Heart right ventricle (tissue), 16 donors: ENCODE measurements at regions of chr1 and their contacts with region 1.

Region 1: DNA sequence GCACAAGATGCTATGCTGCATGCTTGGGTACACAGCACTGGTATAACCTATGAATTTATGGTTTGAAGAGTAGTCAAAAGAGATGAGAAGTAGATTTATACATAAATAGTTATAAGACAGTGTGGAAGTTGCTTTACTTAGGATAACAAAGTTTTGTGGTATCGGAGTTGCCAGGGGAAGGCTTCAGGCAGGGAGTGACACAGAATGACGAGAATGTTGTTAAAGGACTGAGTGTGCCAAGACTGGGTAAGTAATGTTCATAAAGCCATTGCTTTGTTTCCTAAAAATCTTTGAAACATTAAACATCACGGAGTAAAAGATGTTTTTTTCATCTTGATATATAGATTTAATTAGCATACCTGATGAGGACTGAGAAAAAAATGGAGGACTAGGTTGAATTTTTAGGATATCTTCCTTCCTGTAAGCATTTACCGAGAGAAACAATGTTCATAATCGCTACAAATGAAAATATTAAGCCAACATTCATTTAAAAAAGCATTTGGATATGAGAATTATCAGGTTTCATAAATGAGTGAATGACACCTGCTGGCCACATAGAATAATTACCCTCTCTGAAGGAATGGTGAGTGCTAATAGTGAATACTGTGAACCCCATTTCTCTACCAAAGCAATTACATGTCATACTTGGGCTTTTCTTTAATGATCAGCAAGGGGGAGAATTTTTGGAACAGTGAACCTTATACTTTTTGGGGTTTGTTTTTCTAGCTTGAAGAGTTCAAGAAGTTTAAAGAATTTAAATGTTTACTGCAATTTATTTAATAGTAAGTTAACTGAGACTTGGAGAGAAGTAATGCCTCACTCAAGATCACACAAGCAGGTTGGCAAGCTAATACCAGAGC is 28.4 kb downstream of the EXTL2 start:
- DNase-seq: no peak
- ATAC-seq: peak in 7 of 8 donors; percentile 57 to 75 (median 69)
- H3K4me3 ChIP-seq: peak overlapping the region in 1 of 10 donors; percentile 10
- H3K27ac ChIP-seq: no peak overlapping the region
- H3K4me1 ChIP-seq: peaks cover 0 to 11% (median 0%) of the 10 kb centered on the region in 9 donors
- H3K27me3 ChIP-seq: no peaks in the 10 kb centered on the region
- CTCF ChIP-seq: peak; percentile 45 to 78 (median 71)

Region 2: GRCh38 chr1:99808391-99809115 is 1057.7 kb before region 1 on chr1:
- intact Hi-C with region 1: loop called in 7 of 10 experiments (anchors 5 to 10 kb)
- DNase-seq: peak in 1 of 2 donors; percentile 54
- ATAC-seq: peak; percentile 87 to 96 (median 90)
- H3K4me3 ChIP-seq: peak overlapping the region in 4 of 10 donors; percentile 9 to 32 (median 16)
- H3K27ac ChIP-seq: peak overlapping the region in 4 of 10 donors; percentile 26 to 61 (median 45)
- H3K4me1 ChIP-seq: peaks cover 0 to 13% (median 6%) of the 10 kb centered on the region in 9 donors
- H3K27me3 ChIP-seq: peaks cover 0 to 10% (median 8%) of the 10 kb centered on the region in 7 donors
- CTCF ChIP-seq: peak; percentile 48 to 77 (median 71)

Region 3: DNA sequence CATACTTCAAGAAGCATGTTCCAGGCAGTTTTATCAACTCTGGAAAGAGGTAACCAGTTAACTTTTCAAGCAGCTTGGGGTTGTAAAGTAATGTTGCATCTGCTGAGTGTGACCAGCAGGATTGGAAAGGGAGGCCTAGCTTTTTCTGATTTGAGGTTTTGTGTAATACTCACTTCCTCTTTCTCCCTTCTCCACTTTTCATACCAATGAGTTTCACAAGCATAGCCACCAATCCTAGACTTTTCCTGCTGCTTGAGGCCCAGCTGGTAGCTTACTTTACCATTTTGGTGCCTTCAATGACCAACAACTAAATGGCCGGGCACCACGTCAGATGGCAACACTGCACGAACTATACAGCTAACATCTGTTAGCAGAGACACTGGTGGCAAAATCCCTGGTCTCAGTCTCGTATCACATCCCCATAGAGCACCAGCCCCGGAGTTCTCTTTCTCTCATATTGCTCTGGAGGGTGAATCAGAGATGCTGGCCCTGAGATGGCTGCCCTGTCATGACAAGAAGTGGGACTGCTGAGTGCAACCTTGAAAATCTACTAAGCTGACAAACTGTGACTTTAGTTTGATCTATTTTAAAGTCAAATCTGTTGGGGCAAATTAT is 343.1 kb before region 1 on chr1:
- intact Hi-C with region 1: loop called in 1 of 10 experiments (anchors 10 kb)
- DNase-seq: no peak
- ATAC-seq: peak in 2 of 8 donors; percentile 29 to 40
- H3K4me3 ChIP-seq: no peak overlapping the region
- H3K27ac ChIP-seq: no peak overlapping the region
- H3K4me1 ChIP-seq: peaks cover 0 to 10% (median 0%) of the 10 kb centered on the region in 9 donors
- H3K27me3 ChIP-seq: no peaks in the 10 kb centered on the region
- CTCF ChIP-seq: no peak

Region 4: DNA sequence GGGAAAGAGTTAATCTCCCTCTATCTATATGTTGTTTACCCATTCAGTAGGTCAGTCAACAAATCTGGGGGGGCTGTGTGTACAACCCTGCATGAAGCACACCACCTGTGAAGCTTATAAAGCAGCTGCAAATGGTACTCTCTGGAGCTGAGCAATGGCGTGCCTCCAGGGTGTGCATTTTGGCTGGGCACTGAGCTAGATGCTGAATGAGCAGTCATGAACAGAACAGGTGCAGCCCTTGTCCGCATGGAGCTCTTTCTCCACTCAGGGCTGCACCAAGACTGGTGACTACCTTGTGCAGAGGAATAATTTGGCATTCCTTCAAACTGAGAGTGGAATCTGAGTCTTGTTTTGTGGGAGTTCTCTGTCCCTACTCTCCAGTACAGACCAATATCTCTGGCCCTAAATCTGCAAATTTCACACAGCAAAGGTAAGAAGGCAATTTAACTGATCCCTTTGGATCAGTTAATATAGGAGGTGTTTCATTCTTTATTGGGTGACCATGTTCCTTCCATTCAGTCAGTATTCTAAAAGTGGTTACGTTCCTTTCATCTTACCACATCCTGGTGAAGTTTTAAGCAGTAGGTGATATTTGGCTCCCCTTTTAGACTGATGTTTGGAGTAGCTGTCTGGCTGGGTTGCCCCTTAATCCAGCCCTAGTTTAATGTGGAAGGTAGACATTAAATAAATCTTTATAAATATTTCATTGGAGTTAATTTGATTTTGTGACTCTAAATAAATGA is 252.3 kb before region 1 on chr1:
- intact Hi-C with region 1: loop called in 3 of 10 experiments (anchors 2 to 10 kb)
- DNase-seq: no peak
- ATAC-seq: no peak
- H3K4me3 ChIP-seq: no peak overlapping the region
- H3K27ac ChIP-seq: no peak overlapping the region
- H3K4me1 ChIP-seq: no peaks in the 10 kb centered on the region
- H3K27me3 ChIP-seq: no peaks in the 10 kb centered on the region
- CTCF ChIP-seq: no peak

Region 5: DNA sequence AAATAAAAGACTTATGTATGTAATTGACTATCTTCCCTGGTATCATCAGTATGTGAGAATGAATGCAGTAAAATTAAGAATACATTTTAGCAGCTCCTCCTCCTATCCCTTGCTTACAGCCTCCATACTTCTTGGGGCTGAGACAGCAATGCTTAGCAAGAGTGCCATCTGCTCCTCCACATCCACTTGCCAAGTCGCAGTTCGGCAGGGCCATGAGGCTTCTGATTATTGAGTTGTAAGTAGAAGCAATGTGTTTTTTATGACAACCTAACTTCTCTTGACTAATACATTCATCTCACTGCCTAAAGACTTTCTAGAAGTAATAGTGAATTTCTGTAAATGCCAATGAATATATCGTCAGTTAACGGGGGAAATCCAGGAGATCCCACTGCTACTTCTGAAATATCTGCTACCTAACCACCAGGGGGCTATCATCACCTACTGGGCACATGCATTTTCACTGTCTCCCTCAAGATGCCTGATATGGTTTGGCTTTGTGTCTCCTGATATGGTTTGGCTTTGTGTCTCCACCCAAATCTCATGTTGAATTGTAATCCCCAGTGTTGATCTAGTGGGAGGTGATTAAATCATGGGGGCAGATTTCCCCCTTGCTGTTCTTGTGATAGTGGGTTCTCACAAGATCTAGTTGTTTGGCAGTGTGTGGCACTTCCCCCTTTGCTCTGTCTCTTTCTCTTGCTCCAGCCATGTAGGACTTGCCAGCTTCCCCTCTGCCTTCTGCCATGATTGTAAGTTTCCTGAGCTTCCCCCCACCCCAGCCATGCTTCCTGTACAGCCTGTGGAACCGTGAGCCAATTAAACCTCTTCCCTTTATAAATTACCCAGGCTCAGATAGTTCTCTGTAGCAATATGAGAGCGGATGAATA is 31.3 kb before region 1 on chr1:
- intact Hi-C with region 1: loop called in 1 of 10 experiments (anchors 2 kb)
- DNase-seq: no peak
- ATAC-seq: no peak
- H3K4me3 ChIP-seq: no peak overlapping the region
- H3K27ac ChIP-seq: peak overlapping the region in 1 of 10 donors; percentile 45
- H3K4me1 ChIP-seq: peaks cover 0 to 19% (median 5%) of the 10 kb centered on the region in 9 donors
- H3K27me3 ChIP-seq: no peaks in the 10 kb centered on the region
- CTCF ChIP-seq: peak in 7 of 9 donors; percentile 10 to 40 (median 29)